Lower leg skin (tissue), 4 donors: ENCODE measurements at regions of chr9 and their contacts with region 1.

Region 1: GRCh38 chr9:137353223-137354152 is 51.4 kb upstream of the NRARP start:
- DNase-seq: peak in 1 of 2 donors; percentile 26
- H3K4me3 ChIP-seq: no peak overlapping the region
- CTCF ChIP-seq: no peak
- POLR2A ChIP-seq: no peak

Region 2: GRCh38 chr9:137286975-137287383 is 66.5 kb before region 1 on chr9:
- intact Hi-C with region 1: loop called (anchors 2 kb)
- DNase-seq: no peak
- H3K4me3 ChIP-seq: no peak overlapping the region
- CTCF ChIP-seq: no peak
- POLR2A ChIP-seq: no peak